ENCODE measurements at regions of chr3 and their contacts with region 1.

Region 1: DNA sequence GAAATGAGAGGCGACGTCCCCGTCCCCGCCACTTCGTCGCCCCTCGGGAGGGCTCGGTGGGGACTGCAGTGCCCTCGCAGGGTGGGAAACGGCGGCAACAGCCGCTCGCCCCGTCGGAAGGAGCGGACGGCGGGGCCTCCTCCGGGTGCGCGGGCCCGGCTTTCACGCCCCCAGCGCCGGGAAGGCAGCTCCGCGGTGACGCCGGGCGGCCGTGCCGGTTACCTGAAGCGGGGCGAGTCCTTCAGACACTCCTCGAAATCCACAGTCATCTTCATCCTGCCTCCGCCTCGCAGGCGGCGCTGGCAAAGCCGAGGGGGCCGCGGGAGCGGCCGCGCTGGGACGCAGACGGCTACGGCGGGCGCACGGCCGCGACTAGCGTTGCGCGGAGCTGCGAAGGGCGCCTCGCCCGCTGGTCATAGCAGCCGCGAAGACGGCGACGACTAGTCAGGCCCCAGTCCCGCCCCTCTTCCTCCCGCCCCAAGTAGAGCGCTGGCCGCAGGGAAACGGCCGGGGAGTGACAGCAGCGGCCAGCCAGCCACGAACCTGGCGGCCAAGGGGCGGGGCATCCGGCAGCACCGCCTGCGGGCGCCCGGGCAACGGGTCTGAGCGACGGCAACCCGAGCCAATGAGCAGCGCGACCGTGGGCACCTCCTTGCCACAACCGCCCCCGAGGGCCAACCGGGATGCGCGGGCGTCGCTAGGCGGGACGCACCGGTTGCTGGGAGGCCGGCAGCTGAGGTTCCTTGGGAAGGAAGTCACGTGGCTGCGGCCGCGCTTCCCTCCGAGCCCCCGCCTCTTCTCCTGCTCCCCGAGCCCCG is at the start of gene ACAP2:
- DNase-seq: peak; percentile 100
- ATAC-seq: peak; percentile 100
- H3K4me3 ChIP-seq: peak within 1 kb of the TSS; percentile 70 to 94
- H3K27ac ChIP-seq: peak within 1 kb of the TSS in 1 of 2 donors; percentile 72
- H3K4me1 ChIP-seq: no peaks in the 10 kb centered on the region
- H3K27me3 ChIP-seq: no peaks in the 10 kb centered on the region
- total RNA-seq, gene ACAP2: 38.7 to 70.3 TPM

Region 2: DNA sequence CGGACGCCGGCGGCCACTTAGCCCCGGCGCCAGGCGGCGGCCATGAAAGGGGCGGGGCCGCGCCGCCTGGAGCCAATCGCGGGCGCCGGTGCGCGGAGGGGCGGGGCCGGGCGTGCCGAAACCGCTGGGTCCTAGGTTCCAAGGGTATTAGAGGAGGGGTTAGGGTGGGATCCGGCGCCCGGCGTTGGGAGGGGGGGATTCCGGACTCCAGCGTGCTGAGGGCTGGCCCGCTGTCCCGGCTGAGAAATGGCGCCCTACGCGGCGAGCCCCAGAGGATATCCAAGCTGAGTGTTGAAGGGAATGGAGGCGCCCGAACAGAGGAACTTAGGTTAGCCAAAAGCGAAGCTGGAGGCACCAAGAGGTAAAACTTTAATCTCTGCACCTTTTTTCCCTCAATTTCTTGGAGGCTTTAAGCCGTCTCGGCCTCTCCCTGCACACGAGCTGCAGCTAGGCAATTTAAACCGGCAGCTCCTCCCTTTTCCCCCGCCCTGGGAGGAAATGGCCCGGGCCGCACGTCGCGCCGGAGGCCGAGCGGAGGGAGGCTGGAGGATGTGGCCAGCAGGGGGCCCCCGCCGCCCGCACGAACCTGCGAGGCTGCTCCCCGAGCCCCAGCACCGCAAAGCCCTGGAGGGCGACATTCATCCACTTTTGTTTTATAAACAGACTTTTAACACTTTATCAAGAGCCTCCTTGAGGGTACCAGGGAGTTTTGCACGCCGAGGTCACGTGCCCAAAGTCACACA is 171.5 kb before region 1 on chr3 and contains the start of gene XXYLT1:
- intact Hi-C with region 1: loop called in 1 of 2 experiments (anchors 10 kb)
- DNase-seq: peak; percentile 93 to 96
- ATAC-seq: peak; percentile 98
- H3K4me3 ChIP-seq: peak within 1 kb of the TSS; percentile 58 to 75
- H3K27ac ChIP-seq: peak within 1 kb of the TSS in 1 of 2 donors; percentile 21
- H3K4me1 ChIP-seq: no peaks in the 10 kb centered on the region
- H3K27me3 ChIP-seq: no peaks in the 10 kb centered on the region
- total RNA-seq, gene XXYLT1: 8.6 to 15.0 TPM

Region 3: DNA sequence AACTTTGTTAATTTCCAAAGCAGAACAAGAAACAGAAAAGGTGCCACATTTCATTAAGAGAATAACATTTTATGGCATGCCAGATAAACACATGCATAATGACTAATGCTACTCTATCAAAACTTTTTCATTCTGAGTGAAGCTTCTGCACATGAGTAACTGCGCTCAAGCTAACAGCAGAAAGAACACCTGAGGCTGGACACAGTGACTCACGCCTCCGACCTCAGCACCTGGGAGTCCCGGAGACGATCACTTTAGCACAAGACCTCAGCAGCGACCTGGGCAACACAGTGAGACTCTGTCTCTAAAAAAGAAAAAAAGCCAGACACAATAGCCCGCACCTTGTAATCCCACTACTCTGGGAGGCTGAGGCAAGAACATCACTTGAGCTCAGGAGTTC is 70.6 kb before region 1 on chr3:
- intact Hi-C with region 1: no loop called
- DNase-seq: no peak
- ATAC-seq: no peak
- H3K4me3 ChIP-seq: no peak overlapping the region
- H3K27ac ChIP-seq: no peak overlapping the region
- H3K4me1 ChIP-seq: no peaks in the 10 kb centered on the region
- H3K27me3 ChIP-seq: no peaks in the 10 kb centered on the region

Region 4: GRCh38 chr3:195517030-195517429 is 74.2 kb after region 1 on chr3:
- intact Hi-C with region 1: loop called in 1 of 2 experiments (anchors 5 kb)
- DNase-seq: no peak
- ATAC-seq: no peak
- H3K4me3 ChIP-seq: no peak overlapping the region
- H3K27ac ChIP-seq: no peak overlapping the region
- H3K4me1 ChIP-seq: no peaks in the 10 kb centered on the region
- H3K27me3 ChIP-seq: no peaks in the 10 kb centered on the region

Region 5: GRCh38 chr3:195542698-195543499 is 100.1 kb after region 1 on chr3 and contains the start of gene PPP1R2:
- intact Hi-C with region 1: loop called in 1 of 2 experiments (anchors 5 kb)
- DNase-seq: peak; percentile 94 to 97
- ATAC-seq: peak; percentile 97
- H3K4me3 ChIP-seq: peak within 1 kb of the TSS; percentile 80 to 94
- H3K27ac ChIP-seq: peak within 1 kb of the TSS; percentile 78 to 85
- H3K4me1 ChIP-seq: peaks cover 0 to 10% of the 10 kb centered on the region in 2 donors
- H3K27me3 ChIP-seq: no peaks in the 10 kb centered on the region
- total RNA-seq, gene PPP1R2: 53.0 to 55.4 TPM

Measured in aorta (tissue), 5 donors.